ENCODE measurements at regions of chr15 and their contacts with region 1.

Region 1: GRCh38 chr15:44861439-44861910 is 95.0 kb upstream of the TERB2 start:
- DNase-seq: no peak
- H3K4me3 ChIP-seq: no peak overlapping the region
- H3K27ac ChIP-seq: no peak overlapping the region
- H3K4me1 ChIP-seq: no peaks in the 10 kb centered on the region
- H3K27me3 ChIP-seq: no peaks in the 10 kb centered on the region
- CTCF ChIP-seq: no peak

Region 2: DNA sequence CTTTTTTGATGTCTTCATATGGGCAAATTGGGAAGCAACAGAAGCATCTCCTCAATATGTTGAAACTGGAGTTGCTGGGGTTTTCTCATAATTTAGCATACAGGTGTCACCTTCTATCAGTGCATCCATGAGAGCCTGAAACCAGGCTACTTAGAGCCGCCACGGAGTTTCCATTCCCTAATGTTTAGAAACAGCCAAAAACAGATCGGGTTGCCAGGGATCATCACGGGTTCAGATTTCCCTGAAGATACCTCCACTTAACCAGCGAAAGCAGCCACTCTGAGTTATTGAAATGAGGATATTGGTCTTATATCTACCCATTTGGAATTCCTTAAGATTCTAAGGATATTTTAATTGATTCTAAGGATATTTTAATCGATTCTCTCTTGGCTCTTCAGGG is 109.6 kb after region 1 on chr15:
- dilution Hi-C with region 1: loop called (anchors 25 kb)
- DNase-seq: no peak
- H3K4me3 ChIP-seq: no peak overlapping the region
- H3K27ac ChIP-seq: no peak overlapping the region
- H3K4me1 ChIP-seq: no peaks in the 10 kb centered on the region
- H3K27me3 ChIP-seq: no peaks in the 10 kb centered on the region
- CTCF ChIP-seq: no peak

Region 3: GRCh38 chr15:45087513-45087912 is 226.0 kb after region 1 on chr15:
- dilution Hi-C with region 1: no loop called
- DNase-seq: no peak
- H3K4me3 ChIP-seq: no peak overlapping the region
- H3K27ac ChIP-seq: no peak overlapping the region
- H3K4me1 ChIP-seq: peaks cover 6% of the 10 kb centered on the region
- H3K27me3 ChIP-seq: peaks cover 10% of the 10 kb centered on the region
- CTCF ChIP-seq: no peak